Mammary epithelial cell (primary cell): ENCODE measurements at regions of chr10 and their contacts with region 1.

Region 1: GRCh38 chr10:82969405-82969804 is 1094.4 kb downstream of the NRG3 start:
- DNase-seq: peak; percentile 7
- H3K4me3 ChIP-seq: no peak overlapping the region
- H3K27ac ChIP-seq: no peak overlapping the region
- H3K4me1 ChIP-seq: no peaks in the 10 kb centered on the region
- H3K27me3 ChIP-seq: no peaks in the 10 kb centered on the region
- CTCF ChIP-seq: peak; percentile 37 to 53

Region 2: GRCh38 chr10:82150120-82150900 is 819.1 kb before region 1 on chr10:
- CTCF ChIA-PET with region 1: no interaction called
- dilution Hi-C with region 1: no loop called
- in situ Hi-C with region 1: no loop called
- intact Hi-C with region 1: loop called (anchors 5 kb)
- DNase-seq: no peak
- H3K4me3 ChIP-seq: no peak overlapping the region
- H3K27ac ChIP-seq: no peak overlapping the region
- H3K4me1 ChIP-seq: no peaks in the 10 kb centered on the region
- H3K27me3 ChIP-seq: no peaks in the 10 kb centered on the region
- CTCF ChIP-seq: peak; percentile 37 to 51

Region 3: DNA sequence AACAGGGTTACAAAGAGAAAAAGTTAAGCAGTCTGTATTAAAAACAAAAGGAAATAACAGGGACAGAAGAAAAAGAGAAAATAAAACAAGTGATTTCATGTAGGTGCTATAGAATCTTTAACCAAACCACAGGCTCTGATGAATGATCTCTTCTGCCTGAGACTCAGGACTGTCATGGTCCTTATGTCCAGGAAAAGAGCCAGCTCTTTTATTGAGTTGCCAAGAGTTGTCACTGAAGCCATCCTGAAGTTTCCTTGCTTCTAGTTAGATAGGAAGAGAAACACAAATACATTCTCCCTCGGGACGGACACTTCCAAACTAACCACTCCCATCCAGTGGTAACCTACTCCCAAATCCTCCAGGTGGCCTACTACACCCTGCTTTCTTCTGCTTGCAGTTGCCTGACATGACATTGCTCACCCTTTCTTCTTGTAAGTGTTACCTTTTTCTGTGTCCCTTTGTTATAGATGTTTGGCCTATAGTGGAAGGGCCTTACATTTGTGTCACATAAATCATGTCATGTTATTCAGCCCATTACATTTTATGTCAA is 747.7 kb before region 1 on chr10:
- CTCF ChIA-PET with region 1: no interaction called
- dilution Hi-C with region 1: no loop called
- in situ Hi-C with region 1: no loop called
- intact Hi-C with region 1: loop called (anchors 5 kb)
- DNase-seq: peak; percentile 35
- H3K4me3 ChIP-seq: no peak overlapping the region
- H3K27ac ChIP-seq: no peak overlapping the region
- H3K4me1 ChIP-seq: peaks cover 8% of the 10 kb centered on the region
- H3K27me3 ChIP-seq: no peaks in the 10 kb centered on the region
- CTCF ChIP-seq: peak; percentile 39 to 60

Region 4: GRCh38 chr10:82383350-82383749 is 586.1 kb before region 1 on chr10:
- CTCF ChIA-PET with region 1: no interaction called
- dilution Hi-C with region 1: no loop called
- in situ Hi-C with region 1: no loop called
- intact Hi-C with region 1: loop called (anchors 10 kb)
- DNase-seq: no peak
- H3K4me3 ChIP-seq: no peak overlapping the region
- H3K27ac ChIP-seq: no peak overlapping the region
- H3K4me1 ChIP-seq: no peaks in the 10 kb centered on the region
- H3K27me3 ChIP-seq: no peaks in the 10 kb centered on the region
- CTCF ChIP-seq: no peak

Region 5: DNA sequence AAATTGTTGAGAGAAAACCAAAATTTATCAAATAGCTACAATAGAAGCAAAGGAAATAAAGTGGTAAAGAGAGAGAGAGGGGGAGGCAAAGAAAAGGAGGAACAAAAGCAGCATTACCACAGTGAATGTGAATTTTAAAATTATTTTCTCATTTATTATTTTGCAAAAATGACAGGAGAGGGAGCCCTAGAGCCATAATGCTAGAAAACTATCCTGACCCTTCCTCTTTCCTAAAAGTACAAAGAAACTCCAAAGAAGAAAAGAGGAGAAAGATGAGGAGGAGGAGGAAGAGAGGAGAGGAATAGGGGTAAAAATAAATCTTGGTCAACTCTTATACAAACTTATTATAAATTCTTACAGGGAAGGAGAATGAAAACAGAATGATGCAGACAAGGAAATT is 172.9 kb before region 1 on chr10:
- CTCF ChIA-PET with region 1: interaction called, 6 read pairs
- dilution Hi-C with region 1: no loop called
- in situ Hi-C with region 1: no loop called
- intact Hi-C with region 1: loop called (anchors 1 kb)
- DNase-seq: no peak
- H3K4me3 ChIP-seq: no peak overlapping the region
- H3K27ac ChIP-seq: no peak overlapping the region
- H3K4me1 ChIP-seq: no peaks in the 10 kb centered on the region
- H3K27me3 ChIP-seq: no peaks in the 10 kb centered on the region
- CTCF ChIP-seq: peak; percentile 45 to 52

Region 6: GRCh38 chr10:82811621-82812020 is 157.8 kb before region 1 on chr10:
- CTCF ChIA-PET with region 1: interaction called, 5 read pairs
- dilution Hi-C with region 1: no loop called
- in situ Hi-C with region 1: loop called in 1 of 2 experiments (anchors 10 kb)
- intact Hi-C with region 1: loop called (anchors 1 kb)
- DNase-seq: peak; percentile 26
- H3K4me3 ChIP-seq: no peak overlapping the region
- H3K27ac ChIP-seq: no peak overlapping the region
- H3K4me1 ChIP-seq: peaks cover 15% of the 10 kb centered on the region
- H3K27me3 ChIP-seq: no peaks in the 10 kb centered on the region
- CTCF ChIP-seq: peak; percentile 63 to 65

Region 7: DNA sequence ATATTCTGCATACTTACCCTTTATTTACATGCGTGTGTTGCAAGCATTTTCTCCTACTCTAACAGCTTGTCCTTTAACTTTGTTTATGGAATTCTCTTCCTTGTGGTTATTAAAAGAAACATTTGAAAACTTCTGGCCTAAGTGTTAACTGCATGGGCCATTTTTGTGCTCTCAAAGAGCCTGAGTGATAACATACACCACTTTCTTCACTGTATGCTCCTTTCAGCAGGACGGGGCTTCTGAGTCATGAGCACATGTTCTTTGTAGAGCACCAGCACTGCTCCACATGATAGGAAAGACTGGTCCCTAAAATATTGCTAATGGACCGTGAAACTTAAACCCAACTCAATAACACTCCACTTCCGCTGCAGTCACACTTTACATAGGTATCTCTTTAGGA is 76.3 kb after region 1 on chr10:
- CTCF ChIA-PET with region 1: no interaction called
- dilution Hi-C with region 1: no loop called
- in situ Hi-C with region 1: no loop called
- intact Hi-C with region 1: no loop called
- DNase-seq: no peak
- H3K4me3 ChIP-seq: no peak overlapping the region
- H3K27ac ChIP-seq: no peak overlapping the region
- H3K4me1 ChIP-seq: no peaks in the 10 kb centered on the region
- H3K27me3 ChIP-seq: no peaks in the 10 kb centered on the region
- CTCF ChIP-seq: no peak

Region 8: DNA sequence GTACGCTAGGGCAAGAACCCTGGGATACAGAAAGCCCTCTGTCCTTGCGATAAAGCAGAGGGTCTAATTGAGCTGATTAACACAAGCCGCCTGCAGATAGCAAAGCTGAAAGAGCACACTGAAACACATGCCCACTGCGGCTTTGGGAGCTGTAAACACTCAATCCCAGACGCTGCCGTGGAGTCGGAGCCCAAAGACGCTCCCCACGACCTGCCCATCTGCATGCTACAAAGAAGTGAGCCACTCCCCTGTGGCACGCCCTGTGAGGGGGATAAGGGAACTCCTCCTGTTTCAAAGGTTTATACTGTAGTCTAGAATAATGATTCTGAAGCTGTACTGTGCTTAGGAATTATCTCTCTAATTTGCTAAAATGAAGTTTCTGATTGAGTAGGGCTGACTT is 184.3 kb after region 1 on chr10:
- CTCF ChIA-PET with region 1: no interaction called
- dilution Hi-C with region 1: no loop called
- in situ Hi-C with region 1: no loop called
- intact Hi-C with region 1: no loop called
- DNase-seq: no peak
- H3K4me3 ChIP-seq: no peak overlapping the region
- H3K27ac ChIP-seq: no peak overlapping the region
- H3K4me1 ChIP-seq: no peaks in the 10 kb centered on the region
- H3K27me3 ChIP-seq: peaks cover 2% of the 10 kb centered on the region
- CTCF ChIP-seq: no peak